ENCODE measurements at regions of chr14 and their contacts with region 1.

Region 1: GRCh38 chr14:61475316-61475715 is 153.9 kb downstream of the PRKCH start:
- DNase-seq: peak in 1 of 2 experiments; percentile 74
- H3K4me3 ChIP-seq: no peak overlapping the region
- H3K27ac ChIP-seq: peak overlapping the region; percentile 94
- H3K4me1 ChIP-seq: peaks cover 92% of the 10 kb centered on the region
- H3K27me3 ChIP-seq: no peaks in the 10 kb centered on the region
- CTCF ChIP-seq: peak; percentile 90

Region 2: DNA sequence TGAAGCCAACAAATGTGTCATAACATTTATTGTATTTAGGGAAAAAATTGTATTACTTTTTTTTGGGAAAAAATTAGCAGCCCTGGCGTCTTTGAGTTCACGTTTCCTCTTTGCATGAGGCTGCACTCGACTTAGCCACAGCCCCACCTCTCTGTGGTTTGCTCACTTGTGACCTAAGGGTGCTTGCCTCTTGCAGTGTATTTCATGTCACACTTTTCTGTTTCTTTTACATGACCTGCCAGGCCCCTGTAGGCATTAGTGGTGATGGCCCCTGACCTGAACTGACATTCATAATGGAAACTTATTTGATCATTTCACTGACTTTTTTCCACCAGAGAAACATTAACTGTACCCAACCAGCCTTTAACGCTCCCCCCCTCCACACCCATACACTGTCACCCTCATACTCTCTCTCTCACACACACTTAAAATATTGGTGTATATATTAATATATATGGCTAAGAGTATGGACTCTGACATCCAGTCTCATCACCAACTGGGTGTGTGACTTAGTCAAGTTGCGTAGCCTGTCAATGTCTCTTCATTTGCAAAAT is 31.0 kb before region 1 on chr14:
- CTCF ChIA-PET with region 1: no interaction called
- POLR2A ChIA-PET with region 1: no interaction called
- intact Hi-C with region 1: no loop called
- DNase-seq: no peak
- H3K4me3 ChIP-seq: no peak overlapping the region
- H3K27ac ChIP-seq: no peak overlapping the region
- H3K4me1 ChIP-seq: peaks cover 13% of the 10 kb centered on the region
- H3K27me3 ChIP-seq: no peaks in the 10 kb centered on the region
- CTCF ChIP-seq: no peak

Region 3: DNA sequence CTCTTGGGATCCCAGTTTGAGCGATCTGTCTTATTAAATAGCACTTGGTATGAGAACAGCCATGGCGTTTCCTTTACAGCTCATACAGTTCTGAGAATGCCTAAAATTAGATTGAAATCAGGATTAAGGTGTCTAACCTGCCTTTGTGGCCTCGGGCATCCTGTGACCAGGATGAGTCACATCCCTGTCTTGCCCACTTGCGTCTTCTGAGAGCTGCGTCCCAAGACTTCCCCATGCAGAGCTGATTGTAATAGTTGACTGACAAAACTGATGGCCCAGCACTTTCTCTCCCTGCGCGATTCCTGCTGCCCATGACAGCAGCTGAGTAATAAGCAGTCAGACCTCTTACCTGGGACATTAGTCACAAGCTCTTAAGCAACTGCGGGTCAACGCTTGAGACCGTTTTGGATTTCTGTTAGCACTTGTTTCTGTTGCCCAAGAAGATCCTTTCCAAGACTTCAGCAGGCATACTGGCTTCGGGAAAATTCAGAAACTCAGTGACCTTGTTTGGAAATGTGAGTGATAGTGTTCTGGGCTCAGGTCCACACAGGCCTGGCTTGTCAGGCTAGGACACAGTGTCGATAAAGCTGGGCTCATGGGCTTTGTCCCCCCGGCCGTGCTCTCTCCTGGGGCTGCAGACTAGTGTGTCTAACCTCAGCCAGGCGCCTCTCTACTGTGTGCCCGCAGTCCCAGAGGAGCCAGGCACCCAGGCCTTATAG is 50.1 kb after region 1 on chr14:
- CTCF ChIA-PET with region 1: interaction called, 3 read pairs
- POLR2A ChIA-PET with region 1: interaction called, 8 read pairs
- intact Hi-C with region 1: loop called (anchors 1 kb)
- DNase-seq: peak; percentile 94 to 100
- H3K4me3 ChIP-seq: peak overlapping the region; percentile 32; the same call in 1 of the 2 replicates
- H3K27ac ChIP-seq: peak overlapping the region; percentile 98
- H3K4me1 ChIP-seq: peaks cover 69% of the 10 kb centered on the region
- H3K27me3 ChIP-seq: no peaks in the 10 kb centered on the region
- CTCF ChIP-seq: no peak

Region 4: GRCh38 chr14:61616524-61617185 is 141.3 kb after region 1 on chr14:
- CTCF ChIA-PET with region 1: no interaction called
- POLR2A ChIA-PET with region 1: no interaction called
- intact Hi-C with region 1: loop called (anchors 1 kb)
- DNase-seq: peak in 1 of 2 experiments; percentile 83
- H3K4me3 ChIP-seq: no peak overlapping the region
- H3K27ac ChIP-seq: peak overlapping the region; percentile 74
- H3K4me1 ChIP-seq: peaks cover 37% of the 10 kb centered on the region
- H3K27me3 ChIP-seq: no peaks in the 10 kb centered on the region
- CTCF ChIP-seq: no peak

Region 5: DNA sequence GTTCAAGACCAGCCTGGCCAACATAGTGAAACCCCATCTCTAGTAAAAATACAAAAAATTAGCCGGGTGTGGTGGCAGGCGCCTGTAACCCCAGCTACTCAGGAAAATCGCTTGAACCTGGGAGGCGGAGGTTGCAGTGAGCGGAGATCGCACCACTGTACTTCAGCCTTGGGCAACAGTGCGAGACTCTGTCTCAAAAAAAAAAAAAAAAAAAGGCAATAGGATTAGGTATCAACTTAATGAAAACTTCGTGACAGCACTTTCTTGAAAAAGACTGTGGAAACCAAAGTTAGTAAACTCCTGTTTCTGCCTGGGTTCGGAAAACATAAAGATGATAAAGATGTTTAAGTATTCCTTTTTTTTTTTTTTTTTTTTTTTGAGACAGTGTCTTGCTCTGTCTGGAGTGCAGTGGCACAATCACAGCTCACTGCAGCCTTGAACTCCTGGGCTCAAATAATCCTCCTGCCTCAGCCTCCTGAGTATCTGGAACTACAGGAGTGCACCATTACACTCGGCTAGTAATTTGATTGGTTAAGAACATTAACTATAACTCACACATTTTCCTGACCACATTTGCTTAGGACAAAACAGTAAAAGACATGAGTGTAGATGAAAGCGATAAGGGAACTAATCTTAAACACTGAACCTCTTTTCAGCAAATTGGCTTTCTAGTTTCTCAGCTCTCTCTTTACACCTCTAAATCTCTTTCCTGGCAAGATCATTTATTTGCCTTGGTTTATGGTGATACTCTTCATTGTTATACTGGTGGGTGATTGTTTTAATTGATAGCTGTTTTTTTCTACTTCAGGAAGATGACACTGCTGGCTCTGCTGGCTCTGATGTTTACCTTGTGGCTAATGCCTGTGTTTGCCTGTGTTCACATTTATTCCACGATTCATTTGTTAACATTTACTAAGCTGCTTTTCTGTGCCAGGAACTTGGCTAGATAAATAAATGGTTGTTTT is 235.8 kb after region 1 on chr14:
- CTCF ChIA-PET with region 1: no interaction called
- POLR2A ChIA-PET with region 1: interaction called, 10 read pairs
- intact Hi-C with region 1: no loop called
- DNase-seq: peak in 1 of 2 experiments; percentile 63
- H3K4me3 ChIP-seq: no peak overlapping the region
- H3K27ac ChIP-seq: peak overlapping the region; percentile 26
- H3K4me1 ChIP-seq: peaks cover 62% of the 10 kb centered on the region
- H3K27me3 ChIP-seq: no peaks in the 10 kb centered on the region
- CTCF ChIP-seq: no peak

Region 6: DNA sequence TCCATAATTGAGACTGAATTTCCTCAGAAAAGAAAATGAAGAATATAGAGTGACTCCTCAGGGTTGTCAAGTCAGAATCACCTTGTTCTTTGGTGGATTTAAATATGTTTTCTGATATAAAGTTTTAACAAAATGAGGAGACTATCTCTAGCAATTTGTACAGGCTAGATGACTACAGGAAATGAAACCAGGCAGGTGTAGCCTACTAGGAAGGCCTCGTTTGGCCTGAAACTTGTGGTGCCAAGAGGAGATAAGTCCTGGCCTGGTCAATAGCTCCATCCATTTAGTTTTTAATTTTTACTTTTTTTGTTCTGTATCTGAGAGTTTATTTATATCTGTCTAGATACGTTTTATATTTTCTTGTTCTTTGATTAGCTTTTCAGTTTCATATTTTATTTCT is 328.4 kb after region 1 on chr14:
- CTCF ChIA-PET with region 1: interaction called, 15 read pairs
- POLR2A ChIA-PET with region 1: no interaction called
- intact Hi-C with region 1: no loop called
- DNase-seq: no peak
- H3K4me3 ChIP-seq: no peak overlapping the region
- H3K27ac ChIP-seq: no peak overlapping the region
- H3K4me1 ChIP-seq: no peaks in the 10 kb centered on the region
- H3K27me3 ChIP-seq: no peaks in the 10 kb centered on the region
- CTCF ChIP-seq: no peak

Measured in PC-9 (cell line).